HepG2 (cell line): ENCODE measurements at regions of chr16 and their contacts with region 1.

Region 1: DNA sequence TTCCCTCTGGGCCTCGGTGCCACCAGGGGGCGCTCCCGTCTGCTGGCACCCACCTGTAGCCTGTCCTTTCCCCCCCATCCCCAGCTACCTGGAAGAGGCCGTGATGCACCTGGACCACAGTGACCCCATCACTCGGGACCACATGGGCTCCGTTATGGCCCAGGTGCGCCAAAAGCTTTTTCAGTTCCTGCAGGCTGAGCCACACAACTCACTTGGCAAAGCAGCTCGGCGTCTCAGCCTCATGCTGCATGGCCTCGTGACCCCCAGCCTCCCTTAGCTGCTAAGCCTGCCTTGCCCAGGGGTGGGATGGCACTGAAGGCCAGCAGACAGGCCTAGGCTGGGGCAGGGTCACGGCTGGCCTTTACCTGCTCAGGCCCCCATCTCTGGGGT is 818 bp upstream of the NRN1L start:
- DNase-seq: peak; percentile 51
- ATAC-seq: peak; percentile 79
- H3K4me3 ChIP-seq: no peak overlapping the region
- H3K27ac ChIP-seq: peak overlapping the region; percentile 36
- H3K4me1 ChIP-seq: peaks cover 31% of the 10 kb centered on the region
- H3K27me3 ChIP-seq: no peaks in the 10 kb centered on the region
- CTCF ChIP-seq: peak; percentile 96
- EP300 ChIP-seq: no peak
- POLR2A ChIP-seq: no peak
- RAD21 ChIP-seq: peak; percentile 96

Region 2: GRCh38 chr16:67907397-67908180 is 23.7 kb after region 1 on chr16:
- CTCF ChIA-PET with region 1: no interaction called
- POLR2A ChIA-PET with region 1: no interaction called
- in situ Hi-C with region 1: no loop called
- intact Hi-C with region 1: no loop called
- DNase-seq: peak; percentile 48
- ATAC-seq: peak; percentile 83
- H3K4me3 ChIP-seq: no peak overlapping the region
- H3K27ac ChIP-seq: peak overlapping the region; percentile 20
- H3K4me1 ChIP-seq: peaks cover 15% of the 10 kb centered on the region
- H3K27me3 ChIP-seq: no peaks in the 10 kb centered on the region
- CTCF ChIP-seq: peak; percentile 67
- EP300 ChIP-seq: no peak
- POLR2A ChIP-seq: no peak
- RAD21 ChIP-seq: 0 out of 2 replicates have a peak, but pooled peaks have one; percentile 9

Region 3: GRCh38 chr16:67928561-67929364 is 44.9 kb after region 1 on chr16:
- CTCF ChIA-PET with region 1: interaction called, 63 read pairs
- POLR2A ChIA-PET with region 1: interaction called, 3 read pairs
- in situ Hi-C with region 1: loop called (anchors 5 kb)
- intact Hi-C with region 1: loop called (anchors 1 kb)
- DNase-seq: peak; percentile 69
- ATAC-seq: peak; percentile 71
- H3K4me3 ChIP-seq: no peak overlapping the region
- H3K27ac ChIP-seq: no peak overlapping the region
- H3K4me1 ChIP-seq: peaks cover 3% of the 10 kb centered on the region
- H3K27me3 ChIP-seq: no peaks in the 10 kb centered on the region
- CTCF ChIP-seq: peak; percentile 99
- EP300 ChIP-seq: no peak
- POLR2A ChIP-seq: 0 out of 4 replicates have a peak, but pooled peaks of 1 of the 2 experiments have one; percentile 8
- RAD21 ChIP-seq: peak; percentile 98

Region 4: DNA sequence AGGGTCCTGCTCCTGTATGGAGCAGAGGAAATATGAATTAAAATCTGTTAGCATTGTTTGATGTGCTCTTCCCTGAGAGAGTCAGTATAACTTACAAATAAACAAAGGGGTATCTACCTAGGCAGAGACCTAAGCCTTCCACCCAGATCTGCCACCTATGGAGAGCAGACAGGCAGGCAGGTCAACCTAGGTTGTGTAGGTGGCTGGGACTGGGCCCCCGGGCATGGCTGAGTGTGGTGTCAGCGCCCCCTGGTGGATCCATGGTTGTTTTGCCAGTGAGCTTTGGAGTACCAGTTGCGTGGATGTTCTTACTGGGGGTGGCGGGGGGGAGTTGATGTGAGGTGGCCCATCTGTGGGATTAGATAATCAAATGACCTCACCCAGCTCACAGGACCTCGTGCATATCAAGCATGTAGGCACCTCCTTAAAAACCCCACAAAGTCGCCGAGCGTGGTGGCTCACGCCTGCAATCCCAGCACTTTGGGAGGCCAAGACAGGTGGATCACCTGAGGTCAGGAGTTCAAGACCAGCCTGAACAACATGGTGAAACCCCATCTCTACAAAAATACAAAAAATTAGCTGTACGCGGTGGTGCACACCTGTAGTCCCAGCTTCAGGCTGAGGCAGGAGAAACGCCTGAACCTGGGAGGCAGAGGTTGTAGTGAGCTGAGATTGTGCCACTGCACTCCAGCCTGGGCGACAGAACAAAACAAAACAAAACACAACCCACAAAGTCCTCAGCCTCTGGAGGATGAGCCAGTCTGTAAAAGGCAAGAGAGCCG is 156.8 kb after region 1 on chr16:
- CTCF ChIA-PET with region 1: interaction called, 12 read pairs
- POLR2A ChIA-PET with region 1: interaction called, 3 read pairs
- in situ Hi-C with region 1: loop called (anchors 10 kb)
- intact Hi-C with region 1: loop called (anchors 5 kb)
- DNase-seq: peak; percentile 82
- ATAC-seq: peak; percentile 99
- H3K4me3 ChIP-seq: no peak overlapping the region
- H3K27ac ChIP-seq: no peak overlapping the region
- H3K4me1 ChIP-seq: peaks cover 5% of the 10 kb centered on the region; the same call in 1 of the 2 replicates
- H3K27me3 ChIP-seq: no peaks in the 10 kb centered on the region
- CTCF ChIP-seq: peak; percentile 95
- EP300 ChIP-seq: no peak
- POLR2A ChIP-seq: no peak
- RAD21 ChIP-seq: peak; percentile 97